ENCODE measurements at regions of chr1 and their contacts with region 1.

Region 1: DNA sequence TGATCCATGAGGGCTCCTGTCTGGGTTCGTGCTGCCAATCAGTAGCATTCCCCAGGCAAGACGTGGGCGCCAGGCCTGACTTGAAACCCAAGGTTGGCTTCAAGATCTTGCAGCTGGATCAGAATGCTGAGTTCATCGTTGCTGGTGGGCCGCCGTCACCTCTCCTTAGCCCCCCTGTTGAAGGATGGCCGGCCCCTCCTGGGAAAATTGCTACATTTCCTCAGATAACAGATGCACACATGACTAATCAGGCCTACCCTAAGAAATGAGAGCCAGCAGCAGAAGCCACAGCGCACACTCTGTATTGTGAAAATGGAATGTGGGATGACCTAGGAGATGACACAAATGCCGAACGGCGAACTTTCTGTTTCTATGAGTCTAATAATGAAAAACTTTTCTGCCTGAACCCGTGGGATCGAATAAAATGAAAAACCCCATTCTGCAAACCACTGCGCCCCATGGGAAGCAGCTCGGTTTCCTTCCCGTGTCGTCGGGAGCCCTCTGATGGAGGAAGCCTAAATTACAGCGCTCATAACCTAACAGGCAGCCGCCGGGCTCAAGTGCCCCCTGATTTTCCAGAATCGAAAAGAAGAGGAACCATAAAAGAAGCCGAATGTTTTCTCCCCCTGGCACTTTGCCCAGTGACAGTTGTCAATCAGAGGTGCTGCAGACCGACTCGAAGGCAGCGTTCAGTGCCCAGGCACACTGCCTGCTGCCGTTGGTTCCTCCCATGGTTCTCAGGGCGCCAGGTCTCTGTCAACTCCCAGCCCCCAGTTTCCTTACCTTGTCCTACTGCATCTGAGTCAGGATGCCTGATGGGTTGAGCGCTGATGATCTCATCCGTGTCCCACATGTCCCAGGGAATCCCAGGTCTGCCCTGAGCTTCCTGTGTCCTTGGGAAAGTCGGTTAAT is 38.2 kb upstream of the H6PD start:
- DNase-seq: peak; percentile 66
- H3K4me3 ChIP-seq: no peak overlapping the region
- H3K27ac ChIP-seq: no peak overlapping the region
- H3K4me1 ChIP-seq: peaks cover 14% of the 10 kb centered on the region
- H3K27me3 ChIP-seq: peaks cover 2 to 5% of the 10 kb centered on the region in 2 experiments
- CTCF ChIP-seq: peak; percentile 74 to 75
- POLR2A ChIP-seq: no peak

Region 2: DNA sequence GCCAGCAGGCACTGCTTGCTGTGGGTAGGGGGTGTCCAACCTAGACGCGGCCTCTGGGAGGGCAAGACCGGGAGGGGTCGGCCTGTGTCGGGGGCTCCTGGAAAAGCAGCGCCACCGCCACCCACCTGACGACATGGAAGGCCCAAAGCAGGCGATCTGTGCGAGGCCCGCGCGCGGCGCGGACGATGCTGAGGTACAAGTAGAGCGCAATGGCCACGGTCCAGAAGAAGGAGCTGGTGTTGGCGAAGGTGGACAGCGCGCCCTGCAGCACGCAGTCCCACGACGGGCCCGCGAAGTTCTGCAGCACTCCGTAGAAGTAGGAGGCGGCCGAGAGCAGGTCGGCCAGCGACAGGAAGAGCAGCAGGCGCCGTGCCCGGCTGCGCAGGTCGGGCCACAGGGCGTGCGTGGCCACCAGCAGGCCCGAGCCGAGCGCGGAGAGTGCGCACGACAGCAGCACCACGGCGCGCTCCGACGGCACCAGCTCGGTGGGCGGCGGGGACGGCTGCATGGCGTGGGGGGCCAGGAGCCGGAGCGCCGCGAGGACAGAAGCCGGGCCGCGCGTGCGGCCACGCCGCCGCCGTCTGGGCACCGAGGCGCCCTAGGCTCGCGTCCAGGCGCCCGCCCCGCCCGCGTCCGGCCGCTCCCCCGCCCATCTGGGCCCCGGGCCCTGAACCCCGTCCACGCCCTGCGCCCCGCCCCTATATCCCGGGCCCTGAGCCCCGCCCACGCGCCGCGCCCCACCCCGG is 67.7 kb before region 1 on chr1 and contains the start of gene GPR157:
- CTCF ChIA-PET with region 1: interaction called, 4 read pairs
- POLR2A ChIA-PET with region 1: no interaction called
- dilution Hi-C with region 1: no loop called
- intact Hi-C with region 1: loop called (anchors 5 kb)
- DNase-seq: peak; percentile 70
- H3K4me3 ChIP-seq: peak within 1 kb of the TSS; percentile 34 to 49 (median 36)
- H3K27ac ChIP-seq: no peak within 1 kb of the TSS
- H3K4me1 ChIP-seq: peaks cover 8% of the 10 kb centered on the region
- H3K27me3 ChIP-seq: no peaks in the 10 kb centered on the region
- CTCF ChIP-seq: peak in 1 of 2 donors; percentile 19
- POLR2A ChIP-seq: peak; percentile 78
- total RNA-seq, gene GPR157: 5.2 and 6.5 TPM in 2 replicates

Region 3: GRCh38 chr1:9211291-9211811 is 15.0 kb after region 1 on chr1:
- CTCF ChIA-PET with region 1: interaction called, 20 read pairs
- POLR2A ChIA-PET with region 1: interaction called, 4 read pairs
- dilution Hi-C with region 1: no loop called
- intact Hi-C with region 1: no loop called
- DNase-seq: peak; percentile 95
- H3K4me3 ChIP-seq: no peak overlapping the region
- H3K27ac ChIP-seq: peak overlapping the region; percentile 73
- H3K4me1 ChIP-seq: peaks cover 16% of the 10 kb centered on the region
- H3K27me3 ChIP-seq: peaks cover 0 to 2% of the 10 kb centered on the region in 2 experiments
- CTCF ChIP-seq: no peak
- POLR2A ChIP-seq: no peak

Region 4: GRCh38 chr1:9643351-9644256 is 447.2 kb after region 1 on chr1:
- CTCF ChIA-PET with region 1: no interaction called
- POLR2A ChIA-PET with region 1: no interaction called
- dilution Hi-C with region 1: no loop called
- intact Hi-C with region 1: no loop called
- DNase-seq: no peak
- H3K4me3 ChIP-seq: no peak overlapping the region
- H3K27ac ChIP-seq: no peak overlapping the region
- H3K4me1 ChIP-seq: no peaks in the 10 kb centered on the region
- H3K27me3 ChIP-seq: no peaks in the 10 kb centered on the region
- CTCF ChIP-seq: no peak
- POLR2A ChIP-seq: no peak